ENCODE measurements at regions of chr9 and their contacts with region 1.

Region 1: DNA sequence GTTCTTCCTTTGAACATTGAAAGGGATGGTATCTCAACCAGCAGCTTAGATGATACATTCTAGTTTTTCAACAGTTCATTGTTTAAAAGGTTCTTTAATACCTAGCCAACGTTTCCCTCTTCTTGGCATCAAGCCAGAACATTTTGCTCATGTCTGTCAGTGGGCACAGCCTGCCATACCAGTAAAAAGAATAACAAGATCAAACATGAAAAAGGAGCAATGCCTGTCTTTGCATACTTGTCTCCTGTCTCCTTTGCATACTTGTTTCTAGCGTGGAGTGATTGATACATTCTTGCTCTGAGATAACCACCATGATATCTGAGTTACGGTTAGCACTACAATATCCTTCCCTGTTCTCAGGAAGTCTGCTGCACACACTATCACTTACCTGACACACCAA is 248.6 kb upstream of the DAPK1 start:
- DNase-seq: no peak

Region 2: DNA sequence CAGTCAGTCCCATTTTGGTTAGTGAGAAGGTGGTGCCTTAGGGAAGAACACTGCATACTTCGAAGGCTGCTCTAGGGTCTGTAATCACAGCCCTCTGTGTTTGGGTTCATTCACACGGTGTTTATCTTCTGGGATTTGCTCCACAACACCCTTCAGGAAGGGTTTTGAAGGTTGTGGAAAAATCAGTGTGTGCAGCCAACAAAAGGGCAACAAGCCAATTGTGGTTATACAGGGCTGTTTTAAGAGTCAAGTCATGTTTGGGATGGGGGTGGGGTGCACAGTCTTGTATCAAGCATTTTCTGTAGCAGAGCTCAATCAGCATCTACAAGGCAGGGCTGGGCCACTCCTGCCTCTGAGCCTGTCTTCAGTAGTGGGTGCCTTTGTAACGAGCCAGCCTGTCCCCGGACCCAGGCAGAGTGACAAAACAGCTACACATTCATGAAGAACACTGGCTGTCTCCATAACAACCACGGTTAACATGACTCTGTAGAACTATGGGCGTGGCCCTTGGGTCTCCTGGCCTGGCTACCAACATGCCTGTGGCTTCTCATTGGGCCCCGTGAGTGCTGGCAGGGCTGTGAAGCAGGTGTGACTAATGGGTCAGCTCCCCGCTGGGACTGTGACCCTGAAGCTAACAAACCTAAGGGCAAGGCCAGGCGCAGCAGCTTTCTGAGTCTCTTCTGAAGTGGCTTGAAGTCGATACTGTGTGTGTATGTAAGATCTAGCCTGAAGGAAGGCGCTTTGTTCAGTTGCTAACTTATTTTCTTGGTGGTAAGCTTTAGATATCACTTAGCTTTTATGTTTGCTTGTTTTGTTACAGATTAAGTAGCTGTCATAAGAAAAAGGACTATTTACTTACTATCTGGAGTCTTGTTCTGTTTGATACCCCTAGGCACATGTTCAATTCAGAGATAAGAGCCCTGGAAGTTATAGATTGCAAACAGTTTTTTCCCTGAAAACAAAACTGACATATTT is 1121.7 kb before region 1 on chr9:
- intact Hi-C with region 1: loop called in 1 of 2 experiments (anchors 5 kb)
- DNase-seq: no peak

Region 3: GRCh38 chr9:88932766-88933165 is 1683.7 kb after region 1 on chr9:
- intact Hi-C with region 1: loop called in 1 of 2 experiments (anchors 5 kb)
- DNase-seq: no peak